ENCODE measurements at regions of chr1 and their contacts with region 1.

Region 1: DNA sequence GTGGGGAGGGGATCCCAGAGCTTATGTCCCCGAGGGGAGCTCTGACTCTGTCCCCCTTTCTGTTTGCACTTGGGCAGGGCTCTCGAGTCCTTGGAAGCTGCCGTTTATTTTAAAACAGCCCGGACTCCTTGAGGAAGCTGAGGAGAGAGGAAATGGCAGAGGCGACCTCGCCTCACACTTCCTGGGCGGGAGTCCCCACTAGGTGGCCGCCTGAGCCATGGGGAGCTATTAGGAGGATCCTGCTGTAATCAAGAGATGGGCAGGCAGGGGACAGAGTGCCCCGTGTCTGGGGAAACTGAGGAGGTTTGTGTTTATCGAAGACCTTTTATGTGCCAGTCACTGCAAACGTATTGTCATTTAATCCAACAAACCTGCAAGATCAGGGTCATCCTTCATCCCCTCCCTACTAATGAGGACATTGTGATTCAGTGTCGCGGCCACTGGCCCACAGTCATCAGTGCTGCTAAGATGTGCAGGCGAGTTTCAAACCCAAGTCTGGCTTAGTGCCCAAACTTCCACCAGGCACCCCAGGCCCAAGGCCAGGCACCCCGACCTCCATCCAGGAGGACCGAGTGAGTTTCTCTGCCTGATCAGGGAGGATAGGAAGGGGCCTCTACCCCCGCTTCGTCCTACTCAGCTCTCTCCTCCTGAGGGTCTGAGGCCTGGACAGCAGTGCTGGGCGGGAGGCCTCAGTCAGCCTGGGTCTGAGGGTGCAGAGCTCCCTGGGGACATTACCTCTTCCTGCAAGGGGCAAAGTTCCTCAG is 316.9 kb upstream of the VAMP3 start:
- DNase-seq: peak in 1 of 5 donors; percentile 32
- ATAC-seq: peak in 3 of 4 donors; percentile 31 to 71 (median 68)
- H3K4me3 ChIP-seq: no peak overlapping the region
- H3K27ac ChIP-seq: no peak overlapping the region
- H3K4me1 ChIP-seq: peaks cover 0 to 7% (median 0%) of the 10 kb centered on the region in 12 donors
- H3K27me3 ChIP-seq: no peaks in the 10 kb centered on the region
- CTCF ChIP-seq: peak; percentile 27 to 66 (median 44)
- POLR2A ChIP-seq: no peak

Region 2: GRCh38 chr1:7576946-7577641 is 122.9 kb after region 1 on chr1:
- intact Hi-C with region 1: loop called in 2 of 10 experiments (anchors 5 to 10 kb)
- DNase-seq: peak in 2 of 5 donors; percentile 30 to 35
- ATAC-seq: peak in 3 of 4 donors; percentile 39 to 56 (median 40)
- H3K4me3 ChIP-seq: no peak overlapping the region
- H3K27ac ChIP-seq: no peak overlapping the region
- H3K4me1 ChIP-seq: peaks cover 0 to 9% (median 0%) of the 10 kb centered on the region in 12 donors
- H3K27me3 ChIP-seq: no peaks in the 10 kb centered on the region
- CTCF ChIP-seq: peak in 11 of 12 donors; percentile 14 to 51 (median 29)
- POLR2A ChIP-seq: no peak